ENCODE measurements at regions of chr1 and their contacts with region 1.

Region 1: GRCh38 chr1:1063945-1064831 is 9.9 kb downstream of the RNF223 start:
- DNase-seq: peak; percentile 81
- H3K4me3 Mint-ChIP-seq: peak overlapping the region; percentile 44
- H3K27ac Mint-ChIP-seq: peak overlapping the region; percentile 33
- H3K4me1 Mint-ChIP-seq: peaks cover 45% of the 10 kb centered on the region
- H3K27me3 Mint-ChIP-seq: peaks cover 35% of the 10 kb centered on the region

Region 2: GRCh38 chr1:1033009-1033587 is 31.1 kb before region 1 on chr1:
- CTCF ChIA-PET with region 1: interaction called, 33 read pairs
- DNase-seq: peak; percentile 92
- H3K4me3 Mint-ChIP-seq: peak overlapping the region; percentile 41
- H3K27ac Mint-ChIP-seq: no peak overlapping the region
- H3K4me1 Mint-ChIP-seq: peaks cover 8% of the 10 kb centered on the region
- H3K27me3 Mint-ChIP-seq: peaks cover 45% of the 10 kb centered on the region

Region 3: GRCh38 chr1:1040004-1040991 is 23.9 kb before region 1 on chr1:
- CTCF ChIA-PET with region 1: interaction called, 30 read pairs
- DNase-seq: peak; percentile 87
- H3K4me3 Mint-ChIP-seq: peak overlapping the region; percentile 46
- H3K27ac Mint-ChIP-seq: no peak overlapping the region
- H3K4me1 Mint-ChIP-seq: peaks cover 17% of the 10 kb centered on the region
- H3K27me3 Mint-ChIP-seq: peaks cover 50% of the 10 kb centered on the region

Measured in activated naive CD4-positive, alpha-beta T cell treated with anti-CD3 and anti-CD28 coated beads, Interleukin-2, amount 10 ng/mL, durations not matched to agents 7 days and 5 days (primary cell).